ENCODE measurements at regions of chrX and their contacts with region 1.

Region 1: DNA sequence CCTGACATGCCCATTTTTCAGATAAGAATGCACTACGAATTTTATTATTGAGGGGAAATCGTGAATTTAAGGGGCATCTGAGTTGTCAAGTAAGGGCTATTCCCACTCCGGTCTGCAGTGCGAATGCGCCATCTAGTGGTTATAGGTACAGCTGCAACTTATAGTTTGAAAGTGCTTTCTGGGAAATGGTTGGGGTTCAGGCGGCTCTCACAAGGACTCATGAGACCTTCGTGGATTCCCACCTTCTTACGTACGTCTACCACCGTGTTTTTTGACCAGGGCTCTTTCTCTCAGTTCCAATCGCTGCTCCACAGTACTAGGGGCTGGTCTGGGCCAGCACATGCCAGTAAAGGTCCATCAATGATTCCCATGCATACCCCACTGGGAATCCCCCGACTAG is 12.3 kb downstream of the MSL3 start:
- DNase-seq: peak in 7 of 9 experiments; percentile 24 to 83 (median 53)
- ATAC-seq: peak; percentile 60
- H3K4me3 ChIP-seq: no peak overlapping the region
- H3K4me3 Mint-ChIP-seq: no peak overlapping the region
- H3K27ac ChIP-seq: peak overlapping the region in 1 of 2 experiments; percentile 40
- H3K27ac Mint-ChIP-seq: peak overlapping the region; percentile 84
- H3K4me1 ChIP-seq: peaks cover 31% of the 10 kb centered on the region
- H3K4me1 Mint-ChIP-seq: peaks cover 40% of the 10 kb centered on the region
- H3K27me3 ChIP-seq: no peaks in the 10 kb centered on the region
- H3K27me3 Mint-ChIP-seq: no peaks in the 10 kb centered on the region
- CTCF ChIP-seq: peak; percentile 65

Region 2: GRCh38 chrX:11111038-11111851 is 659.1 kb before region 1 on chrX and contains the start of gene HCCS:
- CTCF ChIA-PET with region 1: no interaction called
- POLR2A ChIA-PET with region 1: no interaction called
- intact Hi-C with region 1: loop called (anchors 2 to 10 kb)
- DNase-seq: peak; percentile 67 to 91 (median 84)
- ATAC-seq: peak; percentile 85
- H3K4me3 ChIP-seq: peak within 1 kb of the TSS; percentile 72 to 86
- H3K4me3 Mint-ChIP-seq: peak within 1 kb of the TSS; percentile 95
- H3K27ac ChIP-seq: peak within 1 kb of the TSS; percentile 82 to 95
- H3K27ac Mint-ChIP-seq: peak within 1 kb of the TSS; percentile 99
- H3K4me1 ChIP-seq: peaks cover 15% of the 10 kb centered on the region
- H3K4me1 Mint-ChIP-seq: peaks cover 30% of the 10 kb centered on the region
- H3K27me3 ChIP-seq: no peaks in the 10 kb centered on the region
- H3K27me3 Mint-ChIP-seq: no peaks in the 10 kb centered on the region
- CTCF ChIP-seq: no peak
- total RNA-seq, gene HCCS: 8.3 to 9.1 TPM

Region 3: GRCh38 chrX:11533211-11533651 is 237.1 kb before region 1 on chrX:
- CTCF ChIA-PET with region 1: interaction called, 13 read pairs
- POLR2A ChIA-PET with region 1: interaction called, 5 read pairs
- intact Hi-C with region 1: loop called (anchors 1 kb)
- DNase-seq: peak in 2 of 9 experiments; percentile 66 to 79
- ATAC-seq: peak; percentile 99
- H3K4me3 ChIP-seq: no peak overlapping the region
- H3K4me3 Mint-ChIP-seq: no peak overlapping the region
- H3K27ac ChIP-seq: no peak overlapping the region
- H3K27ac Mint-ChIP-seq: no peak overlapping the region
- H3K4me1 ChIP-seq: no peaks in the 10 kb centered on the region
- H3K4me1 Mint-ChIP-seq: no peaks in the 10 kb centered on the region
- H3K27me3 ChIP-seq: no peaks in the 10 kb centered on the region
- H3K27me3 Mint-ChIP-seq: no peaks in the 10 kb centered on the region
- CTCF ChIP-seq: peak; percentile 90

Region 4: DNA sequence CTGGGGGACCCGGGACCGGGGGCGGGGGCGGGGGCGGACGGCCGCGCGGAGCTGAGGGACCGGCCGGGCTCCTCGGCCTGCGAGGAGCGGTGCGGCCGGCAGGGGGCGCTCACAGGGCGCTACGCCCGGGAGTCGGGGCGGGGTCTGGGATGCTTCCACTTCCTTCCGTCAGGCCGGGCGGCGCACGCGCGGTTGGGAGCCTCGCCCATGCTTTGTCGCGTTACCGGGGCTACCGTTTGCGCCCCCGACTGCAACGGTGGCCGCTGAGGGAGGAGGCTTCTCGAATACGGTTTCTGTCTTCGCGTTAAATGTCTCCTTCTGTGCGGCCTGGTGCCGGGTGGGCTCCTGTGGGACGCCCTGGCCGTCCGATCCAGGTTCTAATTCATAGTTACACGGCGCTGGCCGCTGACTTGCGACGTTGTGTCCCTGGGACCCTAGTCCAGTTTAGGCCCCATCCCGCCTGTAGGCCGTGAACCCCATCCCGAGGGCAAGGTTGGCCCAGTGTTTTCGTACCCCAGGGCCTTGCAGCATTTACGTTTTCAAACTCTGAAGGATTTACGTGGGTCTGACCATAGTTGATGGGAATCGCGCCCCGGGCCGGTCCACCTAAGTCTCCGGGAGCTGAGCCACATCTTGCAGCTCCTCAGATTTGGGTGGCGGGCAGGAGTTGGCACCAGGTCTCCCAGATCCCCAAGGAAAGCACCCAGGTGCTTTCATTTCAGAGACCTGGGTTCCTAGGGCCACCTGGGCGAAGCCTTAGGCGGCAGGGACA is 11.7 kb before region 1 on chrX:
- CTCF ChIA-PET with region 1: interaction called, 15 read pairs
- POLR2A ChIA-PET with region 1: interaction called, 7 read pairs
- intact Hi-C with region 1: loop called (anchors 1 kb)
- DNase-seq: peak; percentile 76 to 93 (median 89)
- ATAC-seq: peak; percentile 61
- H3K4me3 ChIP-seq: peak overlapping the region; percentile 76 to 91
- H3K4me3 Mint-ChIP-seq: peak overlapping the region; percentile 88
- H3K27ac ChIP-seq: peak overlapping the region; percentile 87 to 93
- H3K27ac Mint-ChIP-seq: peak overlapping the region; percentile 97
- H3K4me1 ChIP-seq: peaks cover 18% of the 10 kb centered on the region
- H3K4me1 Mint-ChIP-seq: peaks cover 34% of the 10 kb centered on the region
- H3K27me3 ChIP-seq: no peaks in the 10 kb centered on the region
- H3K27me3 Mint-ChIP-seq: no peaks in the 10 kb centered on the region
- CTCF ChIP-seq: peak; percentile 62

Region 5: GRCh38 chrX:11836284-11836683 is 66.0 kb after region 1 on chrX:
- CTCF ChIA-PET with region 1: no interaction called
- POLR2A ChIA-PET with region 1: no interaction called
- intact Hi-C with region 1: no loop called
- DNase-seq: no peak
- ATAC-seq: no peak
- H3K4me3 ChIP-seq: no peak overlapping the region
- H3K4me3 Mint-ChIP-seq: no peak overlapping the region
- H3K27ac ChIP-seq: no peak overlapping the region
- H3K27ac Mint-ChIP-seq: no peak overlapping the region
- H3K4me1 ChIP-seq: no peaks in the 10 kb centered on the region
- H3K4me1 Mint-ChIP-seq: peaks cover 5% of the 10 kb centered on the region
- H3K27me3 ChIP-seq: no peaks in the 10 kb centered on the region
- H3K27me3 Mint-ChIP-seq: peaks cover 3% of the 10 kb centered on the region
- CTCF ChIP-seq: no peak

Region 6: DNA sequence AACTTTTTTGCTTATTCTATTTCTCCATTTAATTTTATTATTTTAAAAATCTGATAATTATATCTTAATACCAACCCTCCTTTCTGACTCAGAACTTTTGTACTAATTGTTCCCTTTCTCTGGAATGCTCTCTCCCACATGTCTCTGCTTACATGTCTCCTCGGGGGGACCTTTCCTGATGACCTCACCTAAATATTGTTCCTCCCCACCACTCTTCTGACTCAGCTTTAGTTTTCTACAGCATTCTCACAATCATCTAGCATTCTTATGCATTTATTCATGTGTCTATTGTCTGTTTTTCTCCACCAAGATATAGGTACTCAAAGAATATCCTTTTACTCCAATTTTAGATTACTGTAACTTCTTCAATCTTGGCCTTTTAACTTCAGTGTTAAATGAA is 116.4 kb after region 1 on chrX:
- CTCF ChIA-PET with region 1: no interaction called
- POLR2A ChIA-PET with region 1: no interaction called
- intact Hi-C with region 1: no loop called
- DNase-seq: no peak
- ATAC-seq: no peak
- H3K4me3 ChIP-seq: no peak overlapping the region
- H3K4me3 Mint-ChIP-seq: no peak overlapping the region
- H3K27ac ChIP-seq: no peak overlapping the region
- H3K27ac Mint-ChIP-seq: no peak overlapping the region
- H3K4me1 ChIP-seq: no peaks in the 10 kb centered on the region
- H3K4me1 Mint-ChIP-seq: no peaks in the 10 kb centered on the region
- H3K27me3 ChIP-seq: no peaks in the 10 kb centered on the region
- H3K27me3 Mint-ChIP-seq: no peaks in the 10 kb centered on the region
- CTCF ChIP-seq: no peak

Region 7: DNA sequence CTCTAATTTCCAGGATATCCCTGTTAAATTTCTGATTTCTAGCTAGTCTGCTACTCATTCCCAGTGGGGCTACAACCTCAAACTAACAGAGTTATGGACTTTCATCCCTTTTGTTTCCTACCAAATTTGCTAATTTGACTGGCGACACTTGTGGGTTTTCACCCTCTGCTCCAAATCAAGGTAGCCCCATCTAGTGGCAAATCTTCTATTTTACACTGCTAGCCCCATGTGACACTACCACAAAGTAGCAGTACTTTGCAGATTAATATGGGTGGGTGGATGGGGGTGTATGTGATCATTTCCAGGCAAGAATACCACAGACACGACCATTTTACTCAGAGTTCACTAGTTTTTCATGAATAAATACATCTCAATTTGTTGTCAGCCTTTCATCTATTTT is 138.1 kb after region 1 on chrX:
- CTCF ChIA-PET with region 1: interaction called, 3 read pairs
- POLR2A ChIA-PET with region 1: no interaction called
- intact Hi-C with region 1: loop called in 1 of 2 experiments (anchors 5 kb)
- DNase-seq: peak in 2 of 9 experiments; percentile 22 to 54
- ATAC-seq: no peak
- H3K4me3 ChIP-seq: no peak overlapping the region
- H3K4me3 Mint-ChIP-seq: no peak overlapping the region
- H3K27ac ChIP-seq: no peak overlapping the region
- H3K27ac Mint-ChIP-seq: no peak overlapping the region
- H3K4me1 ChIP-seq: peaks cover 5% of the 10 kb centered on the region
- H3K4me1 Mint-ChIP-seq: peaks cover 3% of the 10 kb centered on the region
- H3K27me3 ChIP-seq: no peaks in the 10 kb centered on the region
- H3K27me3 Mint-ChIP-seq: peaks cover 2% of the 10 kb centered on the region
- CTCF ChIP-seq: peak; percentile 46

Region 8: DNA sequence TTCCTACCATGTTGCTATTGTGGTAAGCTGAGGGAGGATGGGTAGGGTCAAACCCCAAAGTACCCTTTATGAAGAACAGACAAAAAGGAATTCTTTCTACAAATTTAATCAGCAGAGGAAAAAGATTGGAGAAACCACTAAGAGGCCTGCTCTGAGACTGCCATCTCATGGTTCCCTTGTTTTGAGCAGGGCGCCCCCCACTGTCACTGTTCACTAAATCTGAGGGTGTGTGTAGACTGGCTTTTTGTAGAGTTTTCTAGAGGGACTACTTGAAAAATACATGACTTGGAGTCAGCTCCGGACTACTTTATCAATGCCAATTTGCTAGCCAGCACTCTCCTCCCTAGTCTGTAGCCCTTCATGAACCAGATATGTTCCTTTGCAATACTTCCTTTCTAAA is 692.7 kb after region 1 on chrX:
- CTCF ChIA-PET with region 1: no interaction called
- POLR2A ChIA-PET with region 1: no interaction called
- intact Hi-C with region 1: no loop called
- DNase-seq: no peak
- ATAC-seq: no peak
- H3K4me3 ChIP-seq: no peak overlapping the region
- H3K4me3 Mint-ChIP-seq: no peak overlapping the region
- H3K27ac ChIP-seq: no peak overlapping the region
- H3K27ac Mint-ChIP-seq: no peak overlapping the region
- H3K4me1 ChIP-seq: no peaks in the 10 kb centered on the region
- H3K4me1 Mint-ChIP-seq: no peaks in the 10 kb centered on the region
- H3K27me3 ChIP-seq: no peaks in the 10 kb centered on the region
- H3K27me3 Mint-ChIP-seq: no peaks in the 10 kb centered on the region
- CTCF ChIP-seq: no peak